ENCODE measurements at regions of chr5 and their contacts with region 1.

Region 1: GRCh38 chr5:142167458-142167857 is 58.9 kb downstream of the NDFIP1 start:
- DNase-seq: no peak
- H3K4me3 ChIP-seq: no peak overlapping the region
- H3K4me3 Mint-ChIP-seq: no peak overlapping the region
- H3K27ac Mint-ChIP-seq: no peak overlapping the region
- H3K4me1 ChIP-seq: peaks cover 32% of the 10 kb centered on the region
- H3K4me1 Mint-ChIP-seq: peaks cover 45% of the 10 kb centered on the region
- H3K27me3 ChIP-seq: no peaks in the 10 kb centered on the region
- H3K27me3 Mint-ChIP-seq: no peaks in the 10 kb centered on the region
- CTCF ChIP-seq: no peak

Region 2: GRCh38 chr5:142186857-142187594 is 19.6 kb after region 1 on chr5:
- CTCF ChIA-PET with region 1: interaction called, 3 read pairs
- POLR2A ChIA-PET with region 1: interaction called, 5 read pairs
- intact Hi-C with region 1: loop called (anchors 1 kb)
- DNase-seq: peak; percentile 72 to 79
- H3K4me3 ChIP-seq: no peak overlapping the region
- H3K4me3 Mint-ChIP-seq: no peak overlapping the region
- H3K27ac Mint-ChIP-seq: peak overlapping the region; percentile 75
- H3K4me1 ChIP-seq: peaks cover 44% of the 10 kb centered on the region
- H3K4me1 Mint-ChIP-seq: peaks cover 32% of the 10 kb centered on the region
- H3K27me3 ChIP-seq: no peaks in the 10 kb centered on the region
- H3K27me3 Mint-ChIP-seq: no peaks in the 10 kb centered on the region
- CTCF ChIP-seq: no peak

Region 3: GRCh38 chr5:142275496-142275895 is 108.0 kb after region 1 on chr5:
- CTCF ChIA-PET with region 1: no interaction called
- POLR2A ChIA-PET with region 1: no interaction called
- intact Hi-C with region 1: no loop called
- DNase-seq: no peak
- H3K4me3 ChIP-seq: no peak overlapping the region
- H3K4me3 Mint-ChIP-seq: no peak overlapping the region
- H3K27ac Mint-ChIP-seq: no peak overlapping the region
- H3K4me1 ChIP-seq: peaks cover 23% of the 10 kb centered on the region
- H3K4me1 Mint-ChIP-seq: peaks cover 18% of the 10 kb centered on the region
- H3K27me3 ChIP-seq: no peaks in the 10 kb centered on the region
- H3K27me3 Mint-ChIP-seq: no peaks in the 10 kb centered on the region
- CTCF ChIP-seq: no peak

Measured in Caco-2 (cell line).